ENCODE measurements at regions of chr17 and their contacts with region 1.

Region 1: GRCh38 chr17:75250009-75250471 is 11.4 kb downstream of the GGA3 start:
- DNase-seq: peak; percentile 64
- H3K4me3 Mint-ChIP-seq: peak overlapping the region; percentile 72
- H3K27ac Mint-ChIP-seq: peak overlapping the region; percentile 95
- H3K4me1 Mint-ChIP-seq: peaks cover 53% of the 10 kb centered on the region
- H3K27me3 Mint-ChIP-seq: no peaks in the 10 kb centered on the region

Region 2: GRCh38 chr17:75191584-75191983 is 58.5 kb before region 1 on chr17:
- intact Hi-C with region 1: no loop called
- DNase-seq: no peak
- H3K4me3 Mint-ChIP-seq: no peak overlapping the region
- H3K27ac Mint-ChIP-seq: no peak overlapping the region
- H3K4me1 Mint-ChIP-seq: peaks cover 12% of the 10 kb centered on the region
- H3K27me3 Mint-ChIP-seq: no peaks in the 10 kb centered on the region

Region 3: GRCh38 chr17:75205037-75205792 is 44.8 kb before region 1 on chr17 and contains the start of gene NUP85:
- intact Hi-C with region 1: loop called (anchors 10 kb)
- DNase-seq: peak; percentile 88
- H3K4me3 Mint-ChIP-seq: peak within 1 kb of the TSS; percentile 91
- H3K27ac Mint-ChIP-seq: peak within 1 kb of the TSS; percentile 96
- H3K4me1 Mint-ChIP-seq: peaks cover 11% of the 10 kb centered on the region
- H3K27me3 Mint-ChIP-seq: no peaks in the 10 kb centered on the region
- total RNA-seq, gene NUP85: 115 and 122 TPM in 2 replicates

Region 4: GRCh38 chr17:75261336-75262111 is 11.5 kb after region 1 on chr17 and contains the starts of genes GGA3 and MRPS7:
- intact Hi-C with region 1: loop called (anchors 1 kb)
- DNase-seq: peak; percentile 93
- H3K4me3 Mint-ChIP-seq: peak within 1 kb of the TSS; percentile 99
- H3K27ac Mint-ChIP-seq: peak within 1 kb of the TSS; percentile 100
- H3K4me1 Mint-ChIP-seq: peaks cover 43% of the 10 kb centered on the region
- H3K27me3 Mint-ChIP-seq: no peaks in the 10 kb centered on the region
- total RNA-seq, gene GGA3: 71.7 and 77.2 TPM in 2 replicates
- total RNA-seq, gene MRPS7: 99.4 and 101 TPM in 2 replicates

Region 5: GRCh38 chr17:75277664-75278071 is 27.6 kb after region 1 on chr17:
- intact Hi-C with region 1: no loop called
- DNase-seq: no peak
- H3K4me3 Mint-ChIP-seq: no peak overlapping the region
- H3K27ac Mint-ChIP-seq: no peak overlapping the region
- H3K4me1 Mint-ChIP-seq: peaks cover 12% of the 10 kb centered on the region
- H3K27me3 Mint-ChIP-seq: no peaks in the 10 kb centered on the region